Panc1 (cell line): ENCODE measurements at regions of chr16 and their contacts with region 1.

Region 1: DNA sequence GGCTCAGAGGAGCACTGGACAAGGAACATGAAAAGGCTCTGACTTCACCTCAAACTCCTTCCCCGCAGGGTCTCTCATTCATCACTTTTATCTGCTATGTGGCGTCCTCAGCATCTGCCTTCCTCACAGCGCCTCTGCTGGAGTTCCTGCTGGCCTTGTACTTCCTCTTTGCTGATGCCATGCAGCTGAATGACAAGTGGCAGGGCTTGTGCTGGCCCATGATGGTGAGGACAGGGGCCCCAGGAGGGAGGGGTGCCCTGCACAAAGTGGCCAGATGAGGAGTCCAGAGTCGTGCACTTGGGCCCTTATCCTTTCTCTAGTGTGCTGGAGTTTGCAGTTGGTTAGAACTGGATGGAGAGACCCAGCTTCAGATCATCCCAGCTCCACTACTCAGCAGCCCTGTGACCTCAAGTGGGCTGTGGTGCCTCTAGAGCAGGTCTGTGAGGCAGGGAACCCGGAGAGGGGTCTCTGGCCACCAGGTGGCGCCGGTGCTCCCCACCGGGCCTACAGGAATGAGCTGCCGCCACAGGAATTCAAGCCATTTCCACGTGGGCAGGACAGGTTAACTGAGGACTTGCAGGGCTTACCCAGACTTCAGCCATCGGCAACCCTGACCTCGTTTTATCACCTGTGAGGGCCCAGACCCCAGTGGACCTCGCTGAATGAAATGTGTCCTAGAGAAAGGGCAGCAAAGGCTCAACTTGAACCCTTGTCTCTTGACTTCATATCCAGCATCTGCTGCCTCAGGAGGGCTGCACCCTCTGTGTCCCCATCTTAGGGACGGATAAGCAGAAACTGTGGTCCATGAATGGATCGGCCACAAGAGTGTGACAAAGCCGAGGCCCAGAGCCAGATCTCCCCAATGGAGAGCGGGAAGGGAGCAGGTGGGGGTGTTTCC is 4.0 kb downstream of the CMTM3 start:
- DNase-seq: no peak
- ATAC-seq: peak; percentile 78
- H3K4me3 ChIP-seq: no peak overlapping the region
- H3K27ac ChIP-seq: peak overlapping the region; percentile 65
- H3K4me1 ChIP-seq: peaks cover 21% of the 10 kb centered on the region
- H3K27me3 ChIP-seq: no peaks in the 10 kb centered on the region
- CTCF ChIP-seq: peak; percentile 91

Region 2: DNA sequence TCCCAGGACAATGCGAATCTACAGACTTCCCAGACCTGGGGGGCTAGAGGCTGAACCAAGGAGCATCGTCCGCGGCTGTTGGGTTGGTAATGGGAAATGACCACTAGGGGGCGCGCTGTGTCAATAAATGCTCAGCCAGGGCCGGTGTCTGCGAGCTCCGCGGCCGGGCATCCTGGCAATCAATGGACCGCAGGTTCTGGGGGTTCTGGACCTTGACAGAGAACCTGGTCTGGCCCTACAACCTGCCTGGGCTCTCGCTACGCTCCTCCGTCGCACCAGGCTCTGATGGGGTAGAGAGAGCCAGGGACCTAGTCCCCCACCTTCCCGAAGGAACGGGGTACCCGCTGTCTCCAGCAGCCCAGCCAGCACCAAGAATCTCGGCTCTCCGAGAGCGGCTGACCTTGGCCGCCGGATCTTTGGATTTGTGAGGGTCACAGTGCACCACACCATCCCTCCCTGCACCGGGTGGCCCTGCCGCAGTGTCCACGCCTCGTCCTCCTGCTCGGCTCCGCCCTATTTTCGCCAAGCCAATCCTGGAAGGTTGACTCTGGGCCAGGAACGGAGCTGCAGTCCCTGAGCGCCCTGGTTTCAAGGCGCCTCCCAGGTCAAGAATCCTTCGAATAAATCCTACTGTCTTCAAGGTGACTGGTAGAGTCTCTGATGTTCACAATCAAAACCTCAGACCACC is 201.8 kb before region 1 on chr16:
- CTCF ChIA-PET with region 1: interaction called, 5 read pairs
- POLR2A ChIA-PET with region 1: no interaction called
- in situ Hi-C with region 1: no loop called
- intact Hi-C with region 1: loop called (anchors 10 kb)
- DNase-seq: peak; percentile 18
- ATAC-seq: peak; percentile 94
- H3K4me3 ChIP-seq: peak overlapping the region; percentile 58 to 81
- H3K27ac ChIP-seq: no peak overlapping the region
- H3K4me1 ChIP-seq: no peaks in the 10 kb centered on the region
- H3K27me3 ChIP-seq: no peaks in the 10 kb centered on the region
- CTCF ChIP-seq: peak; percentile 82

Region 3: DNA sequence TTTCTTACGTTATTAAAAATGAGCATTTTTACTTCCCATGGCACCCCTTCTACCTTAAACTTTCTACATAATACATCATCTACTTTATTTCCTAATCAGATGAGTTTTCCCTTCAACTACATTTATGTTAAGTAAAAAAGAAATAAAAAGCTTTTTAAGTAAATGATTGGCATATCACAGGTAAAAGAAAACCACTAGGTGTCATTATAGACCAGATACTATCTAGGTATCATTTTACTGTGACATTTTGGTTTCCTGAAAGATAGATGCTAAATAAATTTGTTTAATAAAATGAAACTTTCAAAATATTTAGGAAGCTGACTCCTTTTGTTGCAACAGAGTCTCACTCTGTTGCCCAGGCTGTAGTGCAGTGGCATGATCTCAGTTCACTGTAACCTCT is 46.1 kb before region 1 on chr16:
- CTCF ChIA-PET with region 1: interaction called, 11 read pairs
- POLR2A ChIA-PET with region 1: no interaction called
- in situ Hi-C with region 1: no loop called
- intact Hi-C with region 1: no loop called
- DNase-seq: no peak
- ATAC-seq: no peak
- H3K4me3 ChIP-seq: no peak overlapping the region
- H3K27ac ChIP-seq: no peak overlapping the region
- H3K4me1 ChIP-seq: no peaks in the 10 kb centered on the region
- H3K27me3 ChIP-seq: no peaks in the 10 kb centered on the region
- CTCF ChIP-seq: peak; percentile 7; the same call in 1 of the 2 replicates